Activated CD8-positive, alpha-beta T cell treated with anti-CD3 and anti-CD28 coated beads, Interleukin-2, amount 10 ng/mL, durations not matched to agents 7 days and 5 days (primary cell): ENCODE measurements at regions of chrX and their contacts with region 1.

Region 1: DNA sequence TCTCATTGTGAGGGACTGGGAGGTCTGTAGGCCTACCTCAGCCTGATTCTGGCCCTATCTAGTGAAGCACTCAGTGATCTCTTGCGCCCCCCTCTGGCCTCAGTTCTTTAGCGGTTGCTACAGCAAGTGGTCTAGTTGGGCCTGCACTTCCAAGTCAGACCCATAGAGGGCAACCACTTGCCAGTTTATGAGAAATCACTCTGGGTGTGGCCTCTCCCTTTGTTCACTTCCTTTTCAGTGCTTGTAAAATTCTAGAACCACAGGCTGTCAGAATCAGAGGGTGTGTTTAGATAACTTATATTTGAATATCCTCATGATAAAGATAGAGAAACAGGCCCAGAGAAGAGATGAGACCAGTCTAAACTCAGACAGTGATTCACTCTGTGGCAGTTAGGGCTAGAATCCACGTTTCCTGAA is 60.9 kb upstream of the LAS1L start:
- DNase-seq: peak; percentile 96
- ATAC-seq: peak; percentile 78
- H3K4me3 Mint-ChIP-seq: peak overlapping the region; percentile 67
- H3K27ac Mint-ChIP-seq: peak overlapping the region; percentile 96
- H3K4me1 Mint-ChIP-seq: peaks cover 67% of the 10 kb centered on the region
- H3K27me3 Mint-ChIP-seq: no peaks in the 10 kb centered on the region

Region 2: DNA sequence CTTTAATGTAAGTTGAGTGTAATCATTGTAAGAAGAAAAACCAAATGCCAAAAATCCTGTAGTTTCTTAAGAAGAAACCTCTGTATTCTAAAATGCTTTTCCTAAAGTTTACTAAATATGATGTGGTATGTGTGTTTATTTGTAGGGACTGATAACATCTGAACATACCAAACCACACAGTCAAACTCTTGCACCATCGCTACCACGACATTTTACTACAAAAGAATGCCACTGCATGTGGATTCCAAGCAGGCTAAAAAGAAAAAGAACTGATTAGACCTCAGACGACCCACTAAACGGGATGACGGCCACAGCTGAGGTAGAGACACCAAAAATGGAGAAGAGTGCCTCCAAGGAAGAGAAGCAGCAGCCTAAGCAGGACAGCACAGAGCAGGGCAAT is 107.0 kb before region 1 on chrX:
- CTCF ChIA-PET with region 1: no interaction called
- POLR2A ChIA-PET with region 1: no interaction called
- DNase-seq: no peak
- ATAC-seq: no peak
- H3K4me3 Mint-ChIP-seq: no peak overlapping the region
- H3K27ac Mint-ChIP-seq: no peak overlapping the region
- H3K4me1 Mint-ChIP-seq: no peaks in the 10 kb centered on the region
- H3K27me3 Mint-ChIP-seq: no peaks in the 10 kb centered on the region

Region 3: GRCh38 chrX:65508851-65509250 is 86.6 kb before region 1 on chrX:
- CTCF ChIA-PET with region 1: no interaction called
- POLR2A ChIA-PET with region 1: no interaction called
- DNase-seq: no peak
- ATAC-seq: no peak
- H3K4me3 Mint-ChIP-seq: no peak overlapping the region
- H3K27ac Mint-ChIP-seq: peak overlapping the region; percentile 7
- H3K4me1 Mint-ChIP-seq: no peaks in the 10 kb centered on the region
- H3K27me3 Mint-ChIP-seq: no peaks in the 10 kb centered on the region

Region 4: DNA sequence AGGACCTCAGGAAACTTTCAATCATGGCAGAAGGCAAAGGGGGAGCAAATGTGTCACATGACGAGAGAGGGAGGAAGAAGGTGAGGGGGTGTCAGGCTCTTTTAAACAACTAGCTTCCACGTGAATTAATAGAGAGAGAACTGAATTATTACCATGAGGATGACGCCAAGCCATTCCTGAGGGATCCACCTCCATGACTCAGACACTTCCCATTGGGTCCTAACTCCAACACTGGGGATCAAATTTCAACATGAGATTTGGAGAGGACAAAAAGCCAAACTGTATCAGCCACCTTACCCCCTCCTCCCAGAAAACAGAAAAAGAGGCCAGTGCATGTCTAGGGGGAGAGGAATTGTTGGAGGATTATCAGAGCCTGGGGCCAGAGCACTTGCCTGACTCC is 20.4 kb before region 1 on chrX:
- CTCF ChIA-PET with region 1: no interaction called
- POLR2A ChIA-PET with region 1: no interaction called
- DNase-seq: no peak
- ATAC-seq: no peak
- H3K4me3 Mint-ChIP-seq: no peak overlapping the region
- H3K27ac Mint-ChIP-seq: no peak overlapping the region
- H3K4me1 Mint-ChIP-seq: no peaks in the 10 kb centered on the region
- H3K27me3 Mint-ChIP-seq: no peaks in the 10 kb centered on the region

Region 5: GRCh38 chrX:65667503-65668376 is 72.3 kb after region 1 on chrX and contains the start of gene MSN:
- CTCF ChIA-PET with region 1: interaction called, 9 read pairs
- POLR2A ChIA-PET with region 1: interaction called, 16 read pairs
- DNase-seq: peak; percentile 84
- ATAC-seq: peak; percentile 83
- H3K4me3 Mint-ChIP-seq: peak within 1 kb of the TSS; percentile 95
- H3K27ac Mint-ChIP-seq: peak within 1 kb of the TSS; percentile 93
- H3K4me1 Mint-ChIP-seq: peaks cover 33% of the 10 kb centered on the region
- H3K27me3 Mint-ChIP-seq: no peaks in the 10 kb centered on the region
- total RNA-seq, gene MSN: 622 to 627 TPM

Region 6: GRCh38 chrX:65706041-65706828 is 110.8 kb after region 1 on chrX:
- CTCF ChIA-PET with region 1: interaction called, 14 read pairs
- POLR2A ChIA-PET with region 1: no interaction called
- DNase-seq: no peak
- ATAC-seq: peak; percentile 44
- H3K4me3 Mint-ChIP-seq: peak overlapping the region; percentile 43
- H3K27ac Mint-ChIP-seq: peak overlapping the region; percentile 76
- H3K4me1 Mint-ChIP-seq: peaks cover 70% of the 10 kb centered on the region
- H3K27me3 Mint-ChIP-seq: no peaks in the 10 kb centered on the region

Region 7: GRCh38 chrX:65985922-65986588 is 390.6 kb after region 1 on chrX:
- CTCF ChIA-PET with region 1: interaction called, 12 read pairs
- POLR2A ChIA-PET with region 1: no interaction called
- DNase-seq: peak; percentile 59
- ATAC-seq: peak; percentile 93
- H3K4me3 Mint-ChIP-seq: no peak overlapping the region
- H3K27ac Mint-ChIP-seq: peak overlapping the region; percentile 76
- H3K4me1 Mint-ChIP-seq: peaks cover 38% of the 10 kb centered on the region
- H3K27me3 Mint-ChIP-seq: no peaks in the 10 kb centered on the region